Heart right ventricle (tissue), 16 donors: ENCODE measurements at regions of chr7 and their contacts with region 1.

Region 1: DNA sequence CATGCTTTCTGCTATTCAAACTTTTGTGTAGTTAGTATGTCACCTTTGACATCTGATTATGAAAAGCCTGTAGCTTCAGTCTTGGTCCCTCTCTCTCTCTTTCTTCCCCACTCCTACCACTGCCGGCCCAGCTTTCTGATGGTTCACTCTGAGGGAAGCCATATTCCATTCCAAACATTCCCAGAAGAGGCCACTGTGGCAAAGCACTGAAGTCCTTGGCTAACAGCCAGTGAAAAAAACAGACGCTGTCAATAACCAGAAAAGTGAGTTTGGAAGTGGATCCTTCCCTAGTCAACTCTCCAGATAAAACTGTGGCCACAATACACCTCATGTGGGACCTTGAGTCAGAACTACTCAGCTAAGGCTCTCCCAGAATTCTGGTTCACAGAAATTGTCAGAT is 950.7 kb upstream of the PHF14 start:
- DNase-seq: peak in 1 of 2 donors; percentile 11
- ATAC-seq: peak in 2 of 8 donors; percentile 13 to 51
- H3K4me3 ChIP-seq: no peak overlapping the region
- H3K27ac ChIP-seq: no peak overlapping the region
- H3K4me1 ChIP-seq: peaks cover 0 to 5% (median 0%) of the 10 kb centered on the region in 9 donors
- H3K27me3 ChIP-seq: no peaks in the 10 kb centered on the region
- CTCF ChIP-seq: peak in 7 of 9 donors; percentile 32 to 66 (median 51)

Region 2: DNA sequence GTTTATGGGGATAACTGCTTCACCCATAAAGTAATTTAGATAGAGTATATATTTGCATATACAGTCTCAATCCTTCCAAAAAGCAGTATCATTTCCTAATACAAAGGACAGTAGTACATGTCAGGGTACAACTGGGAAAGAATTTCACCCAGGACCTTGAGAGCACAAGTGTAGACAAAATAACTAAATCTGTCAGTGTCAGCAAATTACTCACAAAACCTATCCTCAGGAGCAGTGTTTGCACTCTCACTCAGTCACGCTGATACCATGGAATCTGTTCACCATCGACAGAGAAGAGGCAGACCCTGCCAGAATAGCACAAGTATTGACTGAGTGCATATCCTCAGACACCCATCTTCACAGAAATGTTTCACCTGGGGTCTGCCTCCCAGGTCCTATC is 396.0 kb after region 1 on chr7:
- intact Hi-C with region 1: loop called in 7 of 10 experiments (anchors 5 to 10 kb)
- DNase-seq: no peak
- ATAC-seq: no peak
- H3K4me3 ChIP-seq: no peak overlapping the region
- H3K27ac ChIP-seq: no peak overlapping the region
- H3K4me1 ChIP-seq: no peaks in the 10 kb centered on the region
- H3K27me3 ChIP-seq: no peaks in the 10 kb centered on the region
- CTCF ChIP-seq: no peak